GM12878 (cell line): ENCODE measurements at regions of chr2 and their contacts with region 1.

Region 1: DNA sequence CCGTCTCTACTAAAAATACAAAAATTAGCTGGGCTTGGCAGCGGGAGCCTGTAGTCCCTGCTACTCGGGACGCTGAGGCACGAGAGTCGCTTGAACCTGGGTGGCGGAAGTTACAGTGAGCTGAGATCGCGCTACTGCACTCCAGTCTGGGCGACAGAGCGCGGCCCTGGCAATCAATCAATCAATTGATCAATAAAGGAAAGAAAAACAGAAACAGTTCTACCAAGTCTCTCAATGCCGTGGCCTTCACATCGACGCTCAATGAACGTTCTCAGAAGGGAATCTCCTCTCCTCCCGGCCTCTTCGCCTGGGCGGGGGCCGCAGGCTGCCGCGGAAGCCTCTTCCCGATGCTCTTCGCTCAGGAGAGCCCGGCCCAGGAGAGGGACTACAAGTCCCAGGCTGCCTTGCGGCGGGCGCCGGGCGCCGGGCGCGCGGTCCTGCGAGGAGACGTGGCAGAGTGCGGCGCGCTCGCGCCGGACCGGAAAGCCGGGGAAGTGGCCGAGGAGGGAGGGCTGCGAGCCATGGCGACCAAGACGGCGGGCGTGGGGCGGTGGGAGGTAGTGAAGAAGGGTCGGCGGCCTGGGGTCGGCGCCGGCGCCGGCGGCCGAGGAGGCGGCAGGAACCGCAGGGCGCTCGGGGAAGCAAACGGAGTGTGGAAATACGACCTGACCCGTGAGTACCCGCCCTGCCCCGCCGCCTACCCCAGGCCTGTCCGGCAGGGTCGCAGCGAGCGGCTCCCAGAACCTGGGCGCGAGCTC is at the start of gene TMEM214:
- DNase-seq: peak; percentile 39
- ATAC-seq: peak; percentile 98
- H3K4me3 ChIP-seq: peak within 1 kb of the TSS; percentile 99
- H3K27ac ChIP-seq: peak within 1 kb of the TSS; percentile 91
- H3K4me1 ChIP-seq: peaks cover 22% of the 10 kb centered on the region
- H3K27me3 ChIP-seq: no peaks in the 10 kb centered on the region
- CTCF ChIP-seq: no peak
- EP300 ChIP-seq: no peak
- POLR2A ChIP-seq: peak; percentile 95
- RAD21 ChIP-seq: no peak
- polyA plus RNA-seq, gene TMEM214: 10.4 to 17.6 TPM

Region 2: DNA sequence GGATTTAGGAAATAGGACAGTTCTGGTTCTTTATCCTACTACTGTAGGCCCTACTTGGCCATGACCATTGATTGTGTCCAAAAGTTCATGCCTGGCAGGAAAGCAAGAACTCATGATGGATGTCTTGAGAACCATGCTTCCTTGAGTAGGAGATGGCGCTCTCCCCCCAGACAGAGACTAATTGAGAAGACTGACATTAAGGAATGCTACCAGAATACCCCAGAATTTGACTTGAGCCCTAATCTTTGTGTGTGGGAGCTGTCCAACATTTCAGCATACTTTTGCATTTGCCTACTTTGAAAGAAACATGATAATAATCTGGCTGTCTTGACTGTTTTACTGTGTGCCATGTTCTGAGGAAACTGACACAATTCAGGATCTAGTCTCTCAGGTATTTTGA is 38.9 kb before region 1 on chr2:
- CTCF ChIA-PET with region 1: no interaction called
- POLR2A ChIA-PET with region 1: no interaction called
- RAD21 ChIA-PET with region 1: no interaction called
- SMC1A ChIA-PET with region 1: no interaction called
- in situ Hi-C with region 1: no loop called
- intact Hi-C with region 1: no loop called
- DNase-seq: no peak
- ATAC-seq: no peak
- H3K4me3 ChIP-seq: no peak overlapping the region
- H3K27ac ChIP-seq: no peak overlapping the region
- H3K4me1 ChIP-seq: no peaks in the 10 kb centered on the region
- H3K27me3 ChIP-seq: peaks cover 1 to 2% of the 10 kb centered on the region in 2 experiments; a peak in 3 of 4 replicates
- CTCF ChIP-seq: no peak
- EP300 ChIP-seq: no peak
- POLR2A ChIP-seq: no peak
- RAD21 ChIP-seq: no peak

Region 3: GRCh38 chr2:27071277-27071989 is 38.8 kb after region 1 on chr2 and contains the start of gene OST4:
- CTCF ChIA-PET with region 1: no interaction called
- POLR2A ChIA-PET with region 1: interaction called, 18 read pairs
- RAD21 ChIA-PET with region 1: no interaction called
- SMC1A ChIA-PET with region 1: interaction called, 6 read pairs
- in situ Hi-C with region 1: no loop called
- intact Hi-C with region 1: no loop called
- DNase-seq: no peak
- ATAC-seq: peak; percentile 91
- H3K4me3 ChIP-seq: peak within 1 kb of the TSS; percentile 85
- H3K27ac ChIP-seq: peak within 1 kb of the TSS; percentile 94
- H3K4me1 ChIP-seq: peaks cover 37% of the 10 kb centered on the region
- H3K27me3 ChIP-seq: no peaks in the 10 kb centered on the region
- CTCF ChIP-seq: no peak
- EP300 ChIP-seq: no peak
- POLR2A ChIP-seq: peak; percentile 98
- RAD21 ChIP-seq: no peak
- polyA plus RNA-seq, gene OST4: 1,505 to 1,543 TPM

Region 4: GRCh38 chr2:27079233-27080139 is 46.8 kb after region 1 on chr2:
- CTCF ChIA-PET with region 1: interaction called, 5 read pairs
- POLR2A ChIA-PET with region 1: interaction called, 7 read pairs
- RAD21 ChIA-PET with region 1: interaction called, 3 read pairs
- SMC1A ChIA-PET with region 1: no interaction called
- in situ Hi-C with region 1: no loop called
- intact Hi-C with region 1: loop called (anchors 2 kb)
- DNase-seq: no peak
- ATAC-seq: no peak
- H3K4me3 ChIP-seq: no peak overlapping the region
- H3K27ac ChIP-seq: no peak overlapping the region
- H3K4me1 ChIP-seq: peaks cover 38% of the 10 kb centered on the region
- H3K27me3 ChIP-seq: no peaks in the 10 kb centered on the region
- CTCF ChIP-seq: no peak
- EP300 ChIP-seq: no peak
- POLR2A ChIP-seq: no peak
- RAD21 ChIP-seq: no peak

Region 5: DNA sequence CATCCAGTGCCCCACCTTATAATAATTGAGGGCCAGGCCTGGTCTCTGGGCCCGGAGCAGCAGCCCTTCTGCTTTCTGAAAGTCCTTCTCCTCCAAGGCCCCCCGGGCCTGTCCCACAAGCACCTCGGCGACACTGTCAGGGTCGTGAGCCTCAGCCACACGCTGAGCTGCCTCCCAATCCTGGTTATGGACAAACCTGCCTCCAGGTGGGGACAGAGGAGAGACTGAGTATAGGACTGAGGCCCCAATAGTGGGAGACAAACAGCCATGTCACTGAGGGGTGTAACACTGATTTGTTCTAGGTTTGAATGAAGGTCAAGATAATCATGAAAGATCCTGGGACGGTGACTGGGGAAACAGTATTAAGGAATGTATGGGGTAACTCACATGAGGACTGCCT is 421.3 kb after region 1 on chr2:
- CTCF ChIA-PET with region 1: no interaction called
- POLR2A ChIA-PET with region 1: no interaction called
- RAD21 ChIA-PET with region 1: no interaction called
- SMC1A ChIA-PET with region 1: no interaction called
- in situ Hi-C with region 1: no loop called
- intact Hi-C with region 1: no loop called
- DNase-seq: no peak
- ATAC-seq: no peak
- H3K4me3 ChIP-seq: no peak overlapping the region
- H3K27ac ChIP-seq: no peak overlapping the region
- H3K4me1 ChIP-seq: no peaks in the 10 kb centered on the region
- H3K27me3 ChIP-seq: no peaks in the 10 kb centered on the region
- CTCF ChIP-seq: no peak
- EP300 ChIP-seq: no peak
- POLR2A ChIP-seq: no peak
- RAD21 ChIP-seq: no peak